HCT116 (cell line): ENCODE measurements at regions of chr15 and their contacts with region 1.

Region 1: DNA sequence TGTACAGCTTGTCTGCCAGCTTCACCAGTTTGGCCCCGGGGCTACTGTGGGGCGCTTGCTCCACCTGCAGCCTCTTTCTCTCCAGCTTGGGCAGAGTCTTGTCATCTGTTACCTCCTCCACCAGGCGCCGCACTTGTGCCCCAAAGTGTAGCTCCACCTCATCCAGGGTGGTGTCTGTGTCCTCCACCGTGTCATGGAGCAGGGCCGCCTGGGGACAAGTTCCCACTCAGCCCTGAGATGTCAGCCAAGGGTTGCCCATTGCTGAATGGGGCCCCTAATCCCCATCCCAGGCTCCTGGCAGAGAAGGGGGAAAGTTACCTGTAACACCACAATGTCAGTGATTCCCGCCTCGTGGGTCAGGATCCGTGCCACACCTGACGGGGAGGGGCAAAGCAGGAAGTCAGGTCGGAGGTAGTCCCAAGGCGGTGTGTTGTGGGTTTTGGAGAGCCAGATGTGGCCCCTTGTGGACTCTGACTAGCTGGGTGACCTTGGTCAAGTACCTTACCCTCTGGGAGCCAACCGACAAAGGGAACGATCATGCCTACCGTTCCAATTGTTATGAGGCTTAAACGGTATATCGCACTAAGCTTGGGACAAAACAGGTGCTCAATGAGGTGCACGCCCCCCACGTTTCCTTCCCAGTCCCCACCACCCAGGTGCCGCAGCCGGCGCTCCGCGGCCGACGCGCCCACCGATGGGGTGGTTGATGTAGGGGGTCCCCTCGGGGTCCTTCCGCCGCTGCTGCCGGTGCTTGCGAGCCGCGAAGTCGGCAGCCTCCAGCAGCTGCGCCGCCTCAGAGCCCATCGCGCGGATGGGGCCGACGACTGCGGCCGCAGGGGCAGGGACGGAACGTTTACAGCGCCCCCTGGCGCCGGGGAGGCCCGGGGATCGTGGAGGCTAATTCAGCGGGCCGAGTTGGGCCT is at the start of gene HDDC3:
- DNase-seq: peak; percentile 87
- ATAC-seq: peak; percentile 59
- H3K4me3 ChIP-seq: peak within 1 kb of the TSS; percentile 92 to 93
- H3K27ac ChIP-seq: peak within 1 kb of the TSS; percentile 78
- H3K4me1 ChIP-seq: peaks cover 20 to 53% of the 10 kb centered on the region in 2 experiments; a peak in 3 of 4 replicates
- H3K27me3 ChIP-seq: no peaks in the 10 kb centered on the region
- CTCF ChIP-seq: peak in 2 of 3 experiments; percentile 84 to 92; a peak in 4 of 6 replicates
- POLR2A ChIP-seq: peak; percentile 56
- RAD21 ChIP-seq: no peak
- total RNA-seq, gene HDDC3: 20.4 TPM

Region 2: DNA sequence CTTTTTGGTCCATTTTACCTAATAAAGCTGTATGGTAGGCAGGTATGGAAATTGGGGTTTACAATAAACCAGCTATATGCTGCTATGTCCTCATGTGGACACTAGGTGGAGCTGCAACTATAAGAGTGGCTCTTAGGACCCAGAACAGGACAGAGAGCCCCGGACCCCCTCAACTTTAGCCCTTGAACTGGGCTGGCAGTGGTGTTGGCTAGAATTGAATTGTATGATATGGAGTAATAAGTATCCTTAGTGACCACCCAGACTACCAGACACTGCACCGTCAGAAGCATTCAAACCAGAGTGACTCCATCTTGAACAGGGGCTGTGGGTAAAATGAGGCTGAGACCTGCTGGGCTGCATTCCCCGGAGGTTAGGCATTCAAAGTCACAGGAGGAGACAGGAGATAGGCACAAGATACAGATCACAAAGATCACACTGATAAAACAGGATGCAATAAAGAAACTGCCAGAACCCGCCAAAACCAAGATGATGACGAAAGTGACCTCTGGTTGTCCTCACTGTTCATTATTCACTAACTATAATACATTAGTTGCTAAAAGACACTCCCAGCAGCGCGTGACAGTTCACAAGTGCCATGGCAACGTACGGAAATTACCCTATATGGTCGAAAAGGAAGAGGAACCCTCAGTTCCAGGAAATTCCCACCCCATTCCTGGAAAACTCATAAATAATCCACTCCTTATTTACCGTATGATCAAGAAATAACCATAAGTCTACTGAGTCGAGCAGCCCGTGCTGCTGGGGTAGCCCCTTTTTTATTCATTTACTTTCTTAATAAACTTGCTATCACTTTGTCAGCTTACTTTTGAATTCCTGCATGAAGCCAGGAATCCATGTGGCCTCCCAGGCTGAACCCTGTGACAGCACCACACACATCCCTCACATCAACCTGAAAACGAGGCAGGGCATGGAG is 283.6 kb before region 1 on chr15:
- CTCF ChIA-PET with region 1: interaction called, 14 read pairs
- POLR2A ChIA-PET with region 1: interaction called, 3 read pairs
- RAD21 ChIA-PET with region 1: no interaction called
- intact Hi-C with region 1: no loop called
- DNase-seq: peak; percentile 48
- ATAC-seq: peak; percentile 81
- H3K4me3 ChIP-seq: no peak overlapping the region
- H3K27ac ChIP-seq: no peak overlapping the region
- H3K4me1 ChIP-seq: peaks cover 0 to 23% of the 10 kb centered on the region in 2 experiments; a peak in 3 of 4 replicates
- H3K27me3 ChIP-seq: no peaks in the 10 kb centered on the region
- CTCF ChIP-seq: peak; percentile 82 to 91 (median 87)
- POLR2A ChIP-seq: no peak
- RAD21 ChIP-seq: peak; percentile 96

Region 3: DNA sequence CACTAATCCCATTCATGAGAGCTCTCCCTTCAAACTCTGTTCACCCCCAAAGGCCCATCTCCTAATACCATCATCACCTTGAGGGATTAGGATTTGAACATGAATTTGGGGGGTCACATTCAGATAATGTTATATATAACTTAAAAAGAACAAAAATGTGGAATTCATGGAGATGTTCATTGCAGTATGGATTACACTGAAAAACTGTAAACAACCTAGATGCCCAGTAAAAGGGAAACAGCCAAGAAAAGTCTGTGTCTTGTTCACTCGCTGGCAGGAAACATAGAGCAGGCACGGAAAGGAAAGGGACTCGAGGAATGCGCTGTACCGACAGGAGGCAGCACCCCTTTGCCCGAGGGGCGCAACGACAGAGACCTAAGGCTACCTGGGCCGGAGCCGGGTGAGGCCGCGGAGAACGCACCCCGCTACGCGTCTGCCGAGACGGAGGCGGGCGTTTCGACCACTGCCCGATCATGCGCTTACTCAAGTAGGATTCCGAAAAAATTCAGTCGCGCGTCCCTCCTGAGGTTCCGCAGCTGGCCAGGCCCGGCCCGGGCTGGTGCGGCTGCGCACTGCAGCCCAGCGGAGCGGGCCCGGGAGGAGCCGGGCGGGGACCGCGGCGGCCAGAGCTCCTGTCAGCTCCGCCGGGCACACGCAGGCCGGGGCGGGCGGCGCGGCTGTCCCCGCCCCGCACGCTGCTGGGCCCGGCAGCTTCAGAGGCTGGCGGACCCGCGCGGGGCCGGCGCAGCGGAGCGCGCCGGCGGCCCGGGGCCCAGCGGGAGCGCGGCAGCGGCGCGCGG is 29.8 kb before region 1 on chr15:
- CTCF ChIA-PET with region 1: interaction called, 70 read pairs
- POLR2A ChIA-PET with region 1: interaction called, 8 read pairs
- RAD21 ChIA-PET with region 1: no interaction called
- intact Hi-C with region 1: no loop called
- DNase-seq: peak; percentile 49
- ATAC-seq: peak; percentile 88
- H3K4me3 ChIP-seq: peak overlapping the region; percentile 70 to 84
- H3K27ac ChIP-seq: peak overlapping the region; percentile 87
- H3K4me1 ChIP-seq: peaks cover 10 to 20% of the 10 kb centered on the region in 2 experiments; a peak in 3 of 4 replicates
- H3K27me3 ChIP-seq: no peaks in the 10 kb centered on the region
- CTCF ChIP-seq: peak; percentile 64 to 90 (median 74)
- POLR2A ChIP-seq: peak; percentile 86
- RAD21 ChIP-seq: peak; percentile 54

Region 4: DNA sequence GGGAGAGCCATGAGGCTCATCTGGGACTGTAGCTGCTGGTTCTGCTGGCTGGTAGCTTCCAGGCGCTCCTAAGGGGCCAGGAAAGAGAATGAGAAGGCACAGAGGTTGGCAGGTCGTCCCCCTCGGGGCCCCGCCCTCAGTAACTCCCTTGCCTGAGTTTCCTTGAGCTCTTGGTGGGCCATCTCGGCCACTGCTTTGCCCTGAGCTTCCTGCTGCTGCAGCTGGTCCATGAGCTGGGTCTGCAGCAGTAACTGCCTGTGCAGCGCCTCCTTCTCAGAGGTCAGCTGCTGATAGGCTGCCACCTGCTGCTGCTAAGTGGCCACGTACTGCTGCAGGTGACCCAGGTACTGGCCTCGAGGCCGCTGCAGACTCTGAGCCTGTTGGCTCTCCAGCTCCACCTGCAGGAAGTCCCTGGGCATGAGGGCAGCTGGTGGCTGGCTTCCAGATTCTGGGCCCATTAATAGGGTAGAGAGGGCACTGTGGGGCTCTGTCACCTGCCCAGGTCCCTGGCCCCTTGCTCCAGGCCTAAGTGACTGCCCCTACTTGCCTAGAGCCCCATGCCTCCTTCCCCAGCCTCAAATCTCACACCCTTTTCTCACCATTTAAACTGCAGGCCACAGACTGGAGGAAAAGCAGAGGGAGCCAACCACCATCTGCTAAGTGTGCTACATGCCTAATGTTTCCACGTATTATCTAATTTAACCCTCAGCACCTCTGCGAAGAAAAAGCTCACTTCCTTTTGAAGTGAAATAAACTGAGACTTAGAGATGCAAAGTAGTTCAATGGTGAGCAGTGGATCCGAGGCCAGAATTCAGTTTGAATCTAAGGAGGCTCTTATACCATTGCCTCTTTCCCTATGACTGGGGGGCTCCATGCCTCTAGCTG is 101.2 kb after region 1 on chr15:
- CTCF ChIA-PET with region 1: interaction called, 19 read pairs
- POLR2A ChIA-PET with region 1: interaction called, 5 read pairs
- RAD21 ChIA-PET with region 1: interaction called, 3 to 4 read pairs
- intact Hi-C with region 1: loop called (anchors 5 kb)
- DNase-seq: peak; percentile 83
- ATAC-seq: peak; percentile 97
- H3K4me3 ChIP-seq: no peak overlapping the region
- H3K27ac ChIP-seq: no peak overlapping the region
- H3K4me1 ChIP-seq: peaks cover 0 to 9% of the 10 kb centered on the region in 2 experiments; a peak in 1 of 4 replicates
- H3K27me3 ChIP-seq: no peaks in the 10 kb centered on the region
- CTCF ChIP-seq: peak; percentile 76 to 97 (median 92)
- POLR2A ChIP-seq: no peak
- RAD21 ChIP-seq: peak; percentile 80

Region 5: GRCh38 chr15:91271565-91272153 is 339.7 kb after region 1 on chr15:
- CTCF ChIA-PET with region 1: interaction called, 18 read pairs
- POLR2A ChIA-PET with region 1: interaction called, 3 read pairs
- RAD21 ChIA-PET with region 1: interaction called in 1 of 2 experiments, 3 read pairs
- intact Hi-C with region 1: loop called (anchors 1 kb)
- DNase-seq: peak; percentile 60
- ATAC-seq: peak; percentile 85
- H3K4me3 ChIP-seq: no peak overlapping the region
- H3K27ac ChIP-seq: no peak overlapping the region
- H3K4me1 ChIP-seq: no peaks in the 10 kb centered on the region
- H3K27me3 ChIP-seq: no peaks in the 10 kb centered on the region; the same call in 1 of the 2 replicates
- CTCF ChIP-seq: peak; percentile 70 to 88 (median 81); a peak in 5 of 6 replicates
- POLR2A ChIP-seq: no peak
- RAD21 ChIP-seq: peak; percentile 90